Body of pancreas (tissue), 4 donors: ENCODE measurements at regions of chr12 and their contacts with region 1.

Region 1: GRCh38 chr12:19915392-19916195 is 452.7 kb upstream of the PDE3A start:
- DNase-seq: peak in 3 of 4 donors; percentile 5 to 19 (median 16)
- ATAC-seq: peak; percentile 81
- H3K4me3 ChIP-seq: no peak overlapping the region
- H3K27ac ChIP-seq: no peak overlapping the region
- H3K4me1 ChIP-seq: peaks cover 27% of the 10 kb centered on the region
- H3K27me3 ChIP-seq: no peaks in the 10 kb centered on the region
- CTCF ChIP-seq: peak; percentile 22 to 80 (median 76)
- POLR2A ChIP-seq: no peak

Region 2: DNA sequence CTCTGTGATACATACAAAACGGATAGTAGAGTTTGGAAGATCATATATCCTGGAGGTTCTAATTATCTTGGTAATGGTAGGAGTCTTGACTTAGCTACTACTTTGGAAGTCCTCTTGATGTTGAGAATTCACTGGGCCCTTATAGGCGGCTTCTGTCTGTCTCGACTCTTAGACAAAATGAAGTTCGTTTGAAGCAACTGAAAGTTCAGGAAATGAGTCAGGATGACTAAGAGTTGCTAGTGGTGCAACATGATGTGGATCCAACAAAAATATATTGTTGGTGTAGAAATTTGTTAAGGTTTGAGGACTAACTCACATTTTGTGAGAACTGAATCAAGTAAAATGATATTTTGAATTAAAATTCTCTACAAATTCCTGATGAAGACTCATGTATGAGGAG is 203.6 kb before region 1 on chr12:
- intact Hi-C with region 1: no loop called
- DNase-seq: no peak
- ATAC-seq: no peak
- H3K4me3 ChIP-seq: no peak overlapping the region
- H3K27ac ChIP-seq: peak overlapping the region in 2 of 4 donors; percentile 73 to 77
- H3K4me1 ChIP-seq: peaks cover 18% of the 10 kb centered on the region
- H3K27me3 ChIP-seq: no peaks in the 10 kb centered on the region
- CTCF ChIP-seq: no peak
- POLR2A ChIP-seq: no peak

Region 3: DNA sequence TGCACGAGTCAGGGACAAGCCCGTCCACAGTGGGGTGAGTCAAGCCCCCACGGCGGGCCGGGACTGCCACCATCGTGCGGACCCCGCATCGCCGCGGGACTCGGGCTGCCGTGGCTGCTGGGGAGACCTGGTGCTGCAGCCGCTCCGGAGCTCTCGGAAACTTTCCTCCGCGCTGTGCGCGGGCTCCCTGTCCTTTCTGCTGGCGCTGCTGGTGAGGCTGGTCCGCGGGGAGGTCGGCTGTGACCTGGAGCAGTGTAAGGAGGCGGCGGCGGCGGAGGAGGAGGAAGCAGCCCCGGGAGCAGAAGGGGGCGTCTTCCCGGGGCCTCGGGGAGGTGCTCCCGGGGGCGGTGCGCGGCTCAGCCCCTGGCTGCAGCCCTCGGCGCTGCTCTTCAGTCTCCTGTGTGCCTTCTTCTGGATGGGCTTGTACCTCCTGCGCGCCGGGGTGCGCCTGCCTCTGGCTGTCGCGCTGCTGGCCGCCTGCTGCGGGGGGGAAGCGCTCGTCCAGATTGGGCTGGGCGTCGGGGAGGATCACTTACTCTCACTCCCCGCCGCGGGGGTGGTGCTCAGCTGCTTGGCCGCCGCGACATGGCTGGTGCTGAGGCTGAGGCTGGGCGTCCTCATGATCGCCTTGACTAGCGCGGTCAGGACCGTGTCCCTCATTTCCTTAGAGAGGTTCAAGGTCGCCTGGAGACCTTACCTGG is 453.9 kb after region 1 on chr12:
- intact Hi-C with region 1: loop called (anchors 10 kb)
- DNase-seq: peak; percentile 54 to 65 (median 60)
- ATAC-seq: peak; percentile 69
- H3K4me3 ChIP-seq: peak overlapping the region; percentile 18 to 28
- H3K27ac ChIP-seq: peak overlapping the region; percentile 46 to 84 (median 81)
- H3K4me1 ChIP-seq: peaks cover 22% of the 10 kb centered on the region
- H3K27me3 ChIP-seq: no peaks in the 10 kb centered on the region
- CTCF ChIP-seq: peak in 4 of 7 experiments; percentile 25 to 42 (median 36)
- POLR2A ChIP-seq: peak; percentile 47 to 74 (median 71)